ENCODE measurements at regions of chr2 and their contacts with region 1.

Region 1: DNA sequence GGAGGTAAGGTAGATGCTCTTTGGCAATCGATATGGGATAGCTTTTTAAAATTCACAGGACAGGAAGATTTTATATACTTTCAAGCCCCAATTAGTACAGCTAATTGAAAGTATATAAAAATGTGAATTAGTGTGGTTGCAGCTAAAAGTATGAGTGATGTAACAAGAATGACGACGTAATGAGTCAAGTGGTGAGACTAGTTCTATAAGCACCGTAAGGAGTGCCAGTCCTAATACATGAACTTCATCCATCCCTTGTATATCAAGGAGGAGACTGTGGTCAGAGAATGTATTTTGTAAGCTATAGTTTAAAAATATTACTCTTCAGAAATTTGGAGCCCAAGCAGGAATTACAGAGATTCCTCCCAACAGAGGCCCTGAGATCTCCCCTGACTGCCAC is 25.8 kb downstream of the DNAJC27 start:
- DNase-seq: no peak
- ATAC-seq: no peak
- H3K4me3 ChIP-seq: no peak overlapping the region
- H3K27ac ChIP-seq: no peak overlapping the region
- H3K4me1 ChIP-seq: no peaks in the 10 kb centered on the region
- H3K27me3 ChIP-seq: no peaks in the 10 kb centered on the region
- CTCF ChIP-seq: no peak

Region 2: DNA sequence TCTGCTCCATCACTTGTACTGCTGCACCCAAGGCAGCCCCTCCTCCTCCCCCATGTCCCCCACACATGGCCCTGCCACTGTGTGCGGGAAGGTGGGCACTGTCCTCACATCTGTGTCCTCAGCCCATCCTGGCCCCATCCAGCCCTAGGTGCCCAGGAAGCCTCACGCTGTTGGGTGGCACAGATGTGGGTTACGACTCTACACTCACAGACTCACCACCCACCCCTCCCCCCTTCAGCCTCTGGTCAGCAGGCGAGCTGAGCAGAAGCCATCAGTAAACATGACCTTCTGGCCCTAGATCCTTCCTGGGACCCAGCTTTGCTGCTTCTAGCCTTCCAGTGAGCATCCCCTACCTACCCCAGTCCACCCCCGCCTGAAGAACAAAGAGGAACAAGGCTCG is 68.8 kb before region 1 on chr2:
- CTCF ChIA-PET with region 1: no interaction called
- POLR2A ChIA-PET with region 1: interaction called, 19 read pairs
- in situ Hi-C with region 1: no loop called
- intact Hi-C with region 1: no loop called
- DNase-seq: no peak
- ATAC-seq: no peak
- H3K4me3 ChIP-seq: no peak overlapping the region
- H3K27ac ChIP-seq: no peak overlapping the region
- H3K4me1 ChIP-seq: no peaks in the 10 kb centered on the region
- H3K27me3 ChIP-seq: no peaks in the 10 kb centered on the region
- CTCF ChIP-seq: no peak

Region 3: DNA sequence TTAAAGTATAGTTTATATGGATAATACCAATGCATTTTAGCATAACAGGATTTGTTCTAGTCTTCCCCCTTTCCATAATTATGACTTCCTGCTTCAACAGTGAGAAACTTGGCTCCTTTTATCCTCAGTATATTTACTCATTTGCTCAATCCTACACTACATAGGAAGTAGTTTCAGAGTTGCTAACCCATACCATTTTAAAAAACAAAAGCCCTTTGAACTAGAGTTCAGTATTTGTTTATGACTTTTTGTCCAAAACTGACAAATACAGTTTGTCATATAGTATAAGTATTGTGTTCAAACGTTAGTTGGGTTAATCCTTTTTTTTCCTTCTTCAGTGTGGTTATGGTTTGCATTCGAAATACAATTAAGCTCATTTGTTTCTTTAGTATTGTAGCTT is 31.7 kb after region 1 on chr2:
- CTCF ChIA-PET with region 1: interaction called, 11 read pairs
- POLR2A ChIA-PET with region 1: no interaction called
- in situ Hi-C with region 1: no loop called
- intact Hi-C with region 1: no loop called
- DNase-seq: no peak
- ATAC-seq: no peak
- H3K4me3 ChIP-seq: no peak overlapping the region
- H3K27ac ChIP-seq: no peak overlapping the region
- H3K4me1 ChIP-seq: peaks cover 6% of the 10 kb centered on the region; the same call in 1 of the 2 replicates
- H3K27me3 ChIP-seq: no peaks in the 10 kb centered on the region
- CTCF ChIP-seq: no peak

Region 4: DNA sequence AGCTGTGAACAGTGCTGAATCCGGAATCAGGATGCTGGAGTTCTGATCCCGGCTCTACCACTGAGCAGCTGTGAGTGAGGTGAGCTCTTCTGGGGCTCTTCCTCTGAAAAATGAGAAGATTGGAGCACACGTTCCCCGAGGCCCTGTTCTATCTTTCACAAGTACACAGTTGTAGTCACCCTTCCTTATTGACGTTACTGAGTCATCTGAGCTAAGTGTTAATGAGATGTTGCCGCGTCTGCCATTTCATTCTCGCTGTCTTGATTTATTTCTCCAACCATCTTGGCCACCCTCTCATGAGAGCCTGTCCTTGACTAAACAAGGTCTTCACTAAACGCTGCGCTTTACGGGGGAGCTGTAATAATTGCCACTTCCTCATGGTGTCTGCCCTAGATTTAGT is 64.0 kb after region 1 on chr2:
- CTCF ChIA-PET with region 1: no interaction called
- POLR2A ChIA-PET with region 1: no interaction called
- in situ Hi-C with region 1: no loop called
- intact Hi-C with region 1: no loop called
- DNase-seq: peak; percentile 35
- ATAC-seq: peak; percentile 76
- H3K4me3 ChIP-seq: peak overlapping the region in 1 of 2 experiments; percentile 27; a peak in 2 of 4 replicates
- H3K27ac ChIP-seq: peak overlapping the region; percentile 49; the same call in 1 of the 2 replicates
- H3K4me1 ChIP-seq: peaks cover 8% of the 10 kb centered on the region
- H3K27me3 ChIP-seq: no peaks in the 10 kb centered on the region
- CTCF ChIP-seq: no peak